ENCODE measurements at regions of chr4 and their contacts with region 1.

Region 1: GRCh38 chr4:73729534-73730165 is 10.7 kb upstream of the CXCL8 start:
- DNase-seq: peak; percentile 92
- ATAC-seq: peak; percentile 93
- H3K4me3 ChIP-seq: no peak overlapping the region
- H3K27ac ChIP-seq: no peak overlapping the region
- H3K4me1 ChIP-seq: peaks cover 10% of the 10 kb centered on the region
- H3K27me3 ChIP-seq: no peaks in the 10 kb centered on the region
- CTCF ChIP-seq: peak; percentile 84
- POLR2A ChIP-seq: no peak
- RAD21 ChIP-seq: peak; percentile 73

Region 2: DNA sequence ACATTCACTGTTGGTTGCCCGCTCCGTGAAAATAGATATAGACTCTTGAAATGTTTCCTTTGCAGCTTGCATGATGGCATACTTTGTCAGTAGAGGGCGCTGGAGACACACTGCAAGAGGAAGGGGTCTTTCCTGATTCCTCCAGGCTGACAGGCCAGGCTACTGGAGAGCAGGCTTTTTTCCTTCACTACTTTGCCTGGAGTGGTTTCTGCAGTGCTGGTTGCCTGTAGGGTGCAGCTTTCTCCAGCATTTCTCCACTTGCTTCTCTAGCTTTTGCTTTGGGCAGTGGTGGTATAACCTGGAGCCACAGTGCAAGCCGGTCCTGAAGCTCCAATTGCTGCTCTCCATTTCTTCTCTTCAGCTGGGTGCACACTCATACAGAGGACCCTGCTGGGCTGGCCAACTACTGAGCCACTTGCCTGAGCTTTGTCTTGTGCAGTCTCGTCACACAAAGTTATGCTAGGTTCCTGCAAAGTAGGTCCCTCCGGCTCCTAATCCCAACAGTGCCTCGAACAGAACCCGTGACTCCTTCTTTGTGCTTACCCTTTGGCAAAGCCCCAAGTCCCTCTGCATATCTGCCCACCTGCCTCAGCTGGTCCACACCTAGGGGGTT is 155.8 kb before region 1 on chr4:
- CTCF ChIA-PET with region 1: no interaction called
- POLR2A ChIA-PET with region 1: no interaction called
- dilution Hi-C with region 1: no loop called
- in situ Hi-C with region 1: no loop called
- intact Hi-C with region 1: loop called (anchors 10 kb)
- DNase-seq: peak; percentile 82
- ATAC-seq: peak; percentile 98
- H3K4me3 ChIP-seq: no peak overlapping the region
- H3K27ac ChIP-seq: no peak overlapping the region
- H3K4me1 ChIP-seq: no peaks in the 10 kb centered on the region
- H3K27me3 ChIP-seq: peaks cover 2% of the 10 kb centered on the region; the same call in 1 of the 2 replicates
- CTCF ChIP-seq: peak; percentile 88
- POLR2A ChIP-seq: no peak
- RAD21 ChIP-seq: peak; percentile 80

Region 3: DNA sequence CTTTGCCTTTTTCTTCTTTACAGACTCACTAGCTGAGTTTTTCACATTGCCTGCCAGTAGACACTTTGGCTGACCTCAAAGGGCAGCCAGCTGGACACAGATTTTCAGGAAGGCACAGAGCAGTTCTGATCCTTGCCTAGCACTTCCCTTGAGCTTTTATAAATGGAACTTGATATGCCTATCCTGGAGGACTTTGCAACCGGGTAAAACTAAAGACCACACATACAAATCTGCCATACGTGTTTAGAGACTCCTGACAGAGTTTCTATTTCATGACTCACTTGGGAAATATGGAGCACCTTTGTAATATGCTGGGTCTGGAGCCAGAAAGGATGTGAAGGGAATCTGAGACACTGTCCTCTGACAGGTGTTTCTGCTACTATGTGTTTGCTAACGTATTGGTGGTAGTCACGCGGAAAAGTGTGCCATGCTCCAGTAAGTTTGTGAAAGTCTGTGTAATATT is 52.8 kb before region 1 on chr4:
- CTCF ChIA-PET with region 1: interaction called, 5 read pairs
- POLR2A ChIA-PET with region 1: no interaction called
- dilution Hi-C with region 1: no loop called
- in situ Hi-C with region 1: no loop called
- intact Hi-C with region 1: loop called (anchors 5 kb)
- DNase-seq: peak; percentile 88
- ATAC-seq: peak; percentile 87
- H3K4me3 ChIP-seq: no peak overlapping the region
- H3K27ac ChIP-seq: no peak overlapping the region
- H3K4me1 ChIP-seq: 0 out of 2 replicates have a peak, but pooled peaks cover 2% of the 10 kb centered on the region
- H3K27me3 ChIP-seq: no peaks in the 10 kb centered on the region
- CTCF ChIP-seq: no peak
- POLR2A ChIP-seq: no peak
- RAD21 ChIP-seq: no peak

Region 4: DNA sequence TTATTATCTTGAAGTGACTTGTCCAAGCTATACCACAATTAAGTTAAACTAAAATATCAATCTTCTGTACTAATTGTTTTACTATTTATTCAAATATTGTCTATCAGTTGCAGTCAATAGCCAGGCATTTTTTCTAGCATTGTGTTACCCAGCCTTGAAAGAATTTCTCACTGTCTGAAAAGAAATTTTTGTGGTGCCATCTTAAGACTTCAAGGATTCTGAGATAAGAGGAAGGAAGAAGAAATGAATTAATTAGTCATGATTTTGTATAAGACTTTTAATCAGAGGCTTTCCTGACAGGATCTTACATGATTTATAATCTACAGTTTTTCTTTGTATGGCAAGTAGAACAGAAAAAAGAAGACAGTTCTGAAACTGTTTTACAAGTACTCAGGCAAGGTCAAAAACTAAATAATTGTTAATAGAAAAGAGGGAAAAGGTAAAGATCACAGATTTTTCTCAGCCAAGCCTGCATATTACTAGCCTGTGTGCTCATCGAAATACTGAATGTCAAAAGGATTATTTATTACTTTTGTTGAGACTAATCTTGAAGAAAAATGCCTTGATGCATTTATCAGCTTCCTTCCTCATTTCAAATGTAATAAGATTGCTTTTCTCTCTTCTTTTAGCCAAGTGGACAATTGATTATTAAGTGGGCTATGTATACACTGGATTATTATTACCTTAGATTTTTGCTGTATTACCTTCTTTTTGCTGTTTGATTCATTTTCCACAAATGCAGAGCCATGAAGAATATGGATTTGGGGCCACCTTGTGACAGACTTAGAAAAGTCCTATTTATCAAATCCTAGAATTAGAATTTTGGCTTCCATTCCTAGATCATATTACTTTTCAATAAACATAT is 193.3 kb after region 1 on chr4:
- CTCF ChIA-PET with region 1: interaction called, 4 read pairs
- POLR2A ChIA-PET with region 1: no interaction called
- dilution Hi-C with region 1: no loop called
- in situ Hi-C with region 1: no loop called
- intact Hi-C with region 1: loop called (anchors 1 kb)
- DNase-seq: peak; percentile 59
- ATAC-seq: no peak; the same call in 1 of the 2 replicates
- H3K4me3 ChIP-seq: no peak overlapping the region
- H3K27ac ChIP-seq: no peak overlapping the region
- H3K4me1 ChIP-seq: peaks cover 6% of the 10 kb centered on the region
- H3K27me3 ChIP-seq: peaks cover 8% of the 10 kb centered on the region
- CTCF ChIP-seq: peak; percentile 61
- POLR2A ChIP-seq: no peak
- RAD21 ChIP-seq: peak; percentile 76

Region 5: GRCh38 chr4:74109116-74109869 is 379.6 kb after region 1 on chr4:
- CTCF ChIA-PET with region 1: no interaction called
- POLR2A ChIA-PET with region 1: no interaction called
- dilution Hi-C with region 1: no loop called
- in situ Hi-C with region 1: loop called (anchors 10 kb)
- intact Hi-C with region 1: no loop called
- DNase-seq: peak; percentile 97
- ATAC-seq: peak; percentile 87
- H3K4me3 ChIP-seq: no peak overlapping the region
- H3K27ac ChIP-seq: peak overlapping the region; percentile 68
- H3K4me1 ChIP-seq: peaks cover 10% of the 10 kb centered on the region
- H3K27me3 ChIP-seq: no peaks in the 10 kb centered on the region
- CTCF ChIP-seq: no peak
- POLR2A ChIP-seq: 0 out of 2 replicates have a peak, but pooled peaks have one; percentile 7
- RAD21 ChIP-seq: no peak